ENCODE measurements at regions of chr15 and their contacts with region 1.

Region 1: DNA sequence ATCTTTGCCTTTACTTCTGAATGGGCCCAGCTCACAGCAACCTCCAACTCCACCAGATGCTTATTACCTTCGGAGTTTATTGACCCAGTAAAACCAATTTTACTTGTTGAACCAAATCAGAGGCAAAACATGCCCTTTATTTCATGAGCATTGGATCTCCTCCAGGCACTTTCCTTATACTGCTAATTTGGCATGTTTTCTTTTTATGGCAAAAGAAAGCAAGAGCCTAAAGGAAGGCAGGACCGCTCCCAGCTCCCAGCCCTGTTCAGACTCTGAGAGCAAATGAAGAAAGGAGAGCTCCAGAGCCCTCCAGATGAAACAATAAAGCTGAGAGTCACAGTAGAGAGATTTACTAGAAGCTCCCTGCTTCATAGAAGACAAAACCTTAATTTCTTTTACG is 81.5 kb upstream of the NR2E3 start:
- DNase-seq: no peak
- ATAC-seq: no peak
- H3K4me3 ChIP-seq: no peak overlapping the region
- H3K27ac ChIP-seq: no peak overlapping the region
- H3K4me1 ChIP-seq: no peaks in the 10 kb centered on the region
- H3K27me3 ChIP-seq: no peaks in the 10 kb centered on the region
- CTCF ChIP-seq: no peak

Region 2: GRCh38 chr15:71448688-71449114 is 280.2 kb before region 1 on chr15:
- intact Hi-C with region 1: loop called in 2 of 3 experiments (anchors 5 to 10 kb)
- DNase-seq: peak in 3 of 6 donors; percentile 24 to 70 (median 44)
- ATAC-seq: peak; percentile 76 to 93 (median 86)
- H3K4me3 ChIP-seq: no peak overlapping the region
- H3K27ac ChIP-seq: no peak overlapping the region
- H3K4me1 ChIP-seq: no peaks in the 10 kb centered on the region
- H3K27me3 ChIP-seq: no peaks in the 10 kb centered on the region
- CTCF ChIP-seq: peak; percentile 51 to 90 (median 79)

Region 3: GRCh38 chr15:71455107-71455506 is 273.8 kb before region 1 on chr15:
- intact Hi-C with region 1: loop called in 2 of 3 experiments (anchors 5 to 10 kb)
- DNase-seq: no peak
- ATAC-seq: no peak
- H3K4me3 ChIP-seq: no peak overlapping the region
- H3K27ac ChIP-seq: no peak overlapping the region
- H3K4me1 ChIP-seq: no peaks in the 10 kb centered on the region
- H3K27me3 ChIP-seq: no peaks in the 10 kb centered on the region
- CTCF ChIP-seq: no peak

Region 4: DNA sequence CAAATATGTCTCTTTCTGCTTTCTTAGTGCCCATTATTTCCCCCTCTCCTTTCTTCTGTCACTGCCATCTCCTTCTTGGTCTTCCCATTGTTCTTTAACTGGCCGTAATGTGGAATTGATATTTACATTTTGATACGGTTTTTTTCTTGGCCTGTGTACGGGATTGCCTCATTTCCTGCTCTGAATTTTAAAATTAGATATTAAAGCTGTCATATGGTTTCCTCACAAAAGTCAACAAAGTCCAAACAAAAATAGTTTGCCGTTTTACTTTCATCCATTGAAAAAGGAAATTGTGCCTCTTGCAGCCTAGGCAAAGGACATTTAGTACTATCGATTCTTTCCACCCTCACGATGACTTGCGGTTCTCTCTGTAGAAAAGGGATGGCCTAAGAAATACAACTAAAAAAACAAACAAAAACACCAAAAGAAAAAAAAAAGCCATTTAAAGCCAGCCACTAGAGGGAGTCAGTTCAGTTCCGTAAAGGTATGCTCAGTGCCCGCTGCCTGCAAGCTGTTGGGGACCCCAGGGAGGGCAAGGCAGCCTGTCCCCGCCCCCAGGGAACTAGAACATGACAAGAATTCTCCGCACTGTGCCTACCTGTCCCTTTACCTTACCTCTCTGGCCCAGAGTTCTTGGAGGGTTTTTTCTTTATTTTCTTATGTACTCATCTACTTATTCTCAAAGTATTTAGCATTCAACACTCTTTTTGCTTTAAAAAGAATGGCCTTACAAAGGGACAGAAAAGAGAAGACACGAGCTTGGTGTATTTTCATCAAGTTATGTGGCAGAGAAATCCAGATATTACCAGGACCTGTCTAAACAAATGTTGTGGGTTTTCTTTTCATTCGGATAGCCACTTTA is 51.5 kb after region 1 on chr15:
- intact Hi-C with region 1: no loop called
- DNase-seq: peak in 1 of 6 donors; percentile 34
- ATAC-seq: peak; percentile 53 to 81 (median 72)
- H3K4me3 ChIP-seq: no peak overlapping the region
- H3K27ac ChIP-seq: peak overlapping the region in 2 of 4 donors; percentile 28 to 50
- H3K4me1 ChIP-seq: no peaks in the 10 kb centered on the region
- H3K27me3 ChIP-seq: no peaks in the 10 kb centered on the region
- CTCF ChIP-seq: peak; percentile 41 to 67 (median 46)